Lower leg skin (tissue), 4 donors: ENCODE measurements at regions of chr1 and their contacts with region 1.

Region 1: GRCh38 chr1:99713006-99713405 is 53.4 kb downstream of the FRRS1 start:
- DNase-seq: no peak
- H3K4me3 ChIP-seq: no peak overlapping the region
- CTCF ChIP-seq: no peak
- POLR2A ChIP-seq: no peak

Region 2: GRCh38 chr1:99180343-99180808 is 532.6 kb before region 1 on chr1:
- intact Hi-C with region 1: loop called (anchors 5 kb)
- DNase-seq: peak in 1 of 2 donors; percentile 81
- H3K4me3 ChIP-seq: no peak overlapping the region
- CTCF ChIP-seq: no peak
- POLR2A ChIP-seq: no peak

Region 3: DNA sequence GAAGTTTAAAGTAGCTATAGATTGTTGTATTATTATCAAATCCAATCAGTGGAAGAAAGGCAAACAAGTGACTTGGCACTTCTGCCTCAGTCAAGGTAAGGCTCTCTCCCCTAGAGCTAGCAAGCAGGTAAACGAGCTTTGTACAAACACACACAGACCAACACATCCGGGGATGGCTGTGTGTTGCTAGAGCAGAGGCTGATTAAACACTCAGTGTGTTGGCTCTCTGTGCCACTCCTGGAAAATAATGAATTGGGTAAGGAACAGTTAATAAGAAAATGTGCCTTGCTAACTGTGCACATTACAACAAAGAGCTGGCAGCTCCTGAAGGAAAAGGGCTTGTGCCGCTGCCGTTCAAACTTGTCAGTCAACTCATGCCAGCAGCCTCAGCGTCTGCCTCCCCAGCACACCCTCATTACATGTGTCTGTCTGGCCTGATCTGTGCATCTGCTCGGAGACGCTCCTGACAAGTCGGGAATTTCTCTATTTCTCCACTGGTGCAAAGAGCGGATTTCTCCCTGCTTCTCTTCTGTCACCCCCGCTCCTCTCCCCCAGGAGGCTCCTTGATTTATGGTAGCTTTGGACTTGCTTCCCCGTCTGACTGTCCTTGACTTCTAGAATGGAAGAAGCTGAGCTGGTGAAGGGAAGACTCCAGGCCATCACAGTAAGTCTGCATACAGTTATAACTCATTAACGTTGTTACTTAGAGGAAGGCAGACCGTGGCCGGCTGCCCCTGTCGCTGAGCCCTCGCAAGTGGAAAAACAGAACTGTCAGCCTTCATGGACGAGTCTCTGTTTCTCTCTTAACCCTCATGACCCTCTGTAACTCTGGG is 67.1 kb before region 1 on chr1 and contains the start of gene PALMD:
- intact Hi-C with region 1: no loop called
- DNase-seq: peak; percentile 74 to 91
- H3K4me3 ChIP-seq: peak within 1 kb of the TSS; percentile 25
- CTCF ChIP-seq: no peak
- POLR2A ChIP-seq: no peak
- total RNA-seq, gene PALMD: 68.9 to 75.6 (median 72.1) TPM

Region 4: GRCh38 chr1:99737016-99737415 is 24.0 kb after region 1 on chr1:
- intact Hi-C with region 1: no loop called
- DNase-seq: no peak
- H3K4me3 ChIP-seq: no peak overlapping the region
- CTCF ChIP-seq: no peak
- POLR2A ChIP-seq: no peak